ENCODE measurements at regions of chr3 and their contacts with region 1.

Region 1: DNA sequence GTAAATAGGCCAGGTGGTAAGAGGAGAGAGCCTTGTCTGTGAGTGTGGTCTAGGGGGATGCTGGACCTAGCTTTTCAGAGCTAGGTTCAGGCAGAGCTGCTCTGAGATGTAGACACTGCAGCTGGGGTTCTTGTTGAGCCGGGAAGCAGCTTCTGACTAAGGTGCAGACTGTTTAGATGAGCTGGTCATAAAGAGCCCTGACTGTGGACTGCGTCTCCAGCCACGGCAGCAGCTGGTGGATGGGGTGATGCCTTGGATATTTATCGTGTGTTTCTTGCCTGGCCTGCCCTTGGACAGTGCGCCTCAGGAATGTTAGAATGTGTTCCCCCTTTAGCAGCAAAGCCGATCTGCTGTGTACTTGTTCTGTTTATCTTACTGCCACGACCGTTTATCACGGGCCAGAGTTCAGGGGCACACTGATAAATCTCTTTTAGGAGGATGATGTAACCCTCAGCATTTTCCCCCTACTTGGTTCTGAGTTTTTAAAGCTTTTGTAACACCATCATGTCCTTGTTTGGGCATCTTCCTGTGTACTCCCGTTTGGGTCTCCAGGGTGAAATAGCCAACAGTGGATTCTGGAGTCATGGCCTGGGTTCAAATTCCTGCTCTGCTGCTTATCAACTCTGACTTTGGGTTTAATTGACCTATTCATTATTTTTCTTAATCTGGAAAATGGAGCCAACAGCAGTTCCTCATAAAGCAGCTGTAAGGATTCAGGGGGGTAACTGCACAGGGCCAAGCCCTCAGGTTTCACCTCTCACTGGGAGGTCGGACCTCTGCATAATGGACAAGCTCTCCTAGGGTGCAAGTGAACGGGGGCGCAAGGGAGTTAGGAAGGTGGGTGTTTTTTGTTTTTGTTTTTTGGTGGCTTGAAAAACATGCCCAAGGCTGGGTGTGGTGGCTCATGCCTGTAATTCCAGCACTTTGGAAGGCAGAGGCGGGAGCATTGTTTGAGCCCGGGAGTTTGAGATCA is 51.4 kb downstream of the FLNB start:
- DNase-seq: peak; percentile 50 to 66 (median 60)
- ATAC-seq: peak; percentile 88
- H3K4me3 ChIP-seq: no peak overlapping the region
- H3K27ac ChIP-seq: peak overlapping the region; percentile 34 to 75 (median 54)
- H3K4me1 ChIP-seq: peaks cover 39% of the 10 kb centered on the region
- H3K27me3 ChIP-seq: no peaks in the 10 kb centered on the region
- CTCF ChIP-seq: no peak
- POLR2A ChIP-seq: peak in 2 of 3 donors; percentile 21 to 52

Region 2: GRCh38 chr3:58013973-58014649 is 45.5 kb before region 1 on chr3:
- intact Hi-C with region 1: loop called (anchors 10 kb)
- DNase-seq: peak in 2 of 4 donors; percentile 37 to 40
- ATAC-seq: no peak
- H3K4me3 ChIP-seq: no peak overlapping the region
- H3K27ac ChIP-seq: peak overlapping the region in 3 of 4 donors; percentile 12 to 32 (median 27)
- H3K4me1 ChIP-seq: peaks cover 87% of the 10 kb centered on the region
- H3K27me3 ChIP-seq: no peaks in the 10 kb centered on the region
- CTCF ChIP-seq: no peak
- POLR2A ChIP-seq: no peak

Region 3: DNA sequence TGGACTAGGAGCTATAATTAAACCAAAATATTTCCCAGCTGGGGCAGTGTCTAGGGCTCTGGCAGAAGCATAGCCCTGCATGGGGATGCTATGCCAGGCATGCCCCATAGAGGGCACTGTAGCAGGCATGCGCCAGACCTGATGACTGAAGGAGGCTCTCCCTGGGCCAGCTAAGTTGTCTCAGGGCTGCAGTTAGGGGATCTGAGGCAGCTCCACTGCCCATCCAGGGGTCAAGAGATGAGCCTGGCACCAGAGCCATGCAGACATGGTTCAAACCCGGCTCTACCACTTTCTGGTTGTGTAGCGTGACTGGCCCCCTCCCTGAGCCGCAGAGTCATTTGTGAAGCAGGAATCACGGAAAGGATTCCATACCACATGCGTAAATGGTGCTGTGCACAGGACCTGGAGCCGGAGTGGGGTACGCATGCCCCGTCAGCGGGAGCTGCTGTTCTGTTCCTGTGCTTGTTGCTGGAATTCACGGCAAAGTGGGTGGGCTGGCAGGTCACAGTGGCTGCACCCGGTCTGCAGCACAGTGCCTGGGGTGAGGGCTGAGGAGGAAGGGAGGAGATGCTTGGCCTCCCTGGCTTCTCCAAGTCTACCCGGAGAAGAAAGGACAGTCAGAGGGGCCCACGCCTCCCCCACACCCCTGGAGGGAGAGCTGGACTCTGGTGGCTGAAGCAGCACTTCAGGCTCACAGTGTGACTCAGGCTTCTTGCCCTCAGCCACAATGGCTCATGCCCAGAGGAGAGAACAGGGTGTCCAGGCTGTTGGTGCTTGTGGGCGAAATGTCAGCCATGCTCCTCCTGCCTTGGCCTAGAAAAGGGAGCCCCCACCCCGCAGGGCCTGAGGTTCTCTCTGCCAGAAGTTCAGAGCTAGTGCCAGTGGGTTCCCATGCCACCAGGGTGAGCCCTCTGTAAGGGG is 108.1 kb after region 1 on chr3:
- intact Hi-C with region 1: no loop called
- DNase-seq: peak; percentile 68 to 81 (median 74)
- ATAC-seq: no peak
- H3K4me3 ChIP-seq: no peak overlapping the region
- H3K27ac ChIP-seq: peak overlapping the region in 3 of 4 donors; percentile 7 to 88 (median 26)
- H3K4me1 ChIP-seq: peaks cover 55% of the 10 kb centered on the region
- H3K27me3 ChIP-seq: no peaks in the 10 kb centered on the region
- CTCF ChIP-seq: peak; percentile 69 to 91 (median 79)
- POLR2A ChIP-seq: no peak

Measured in body of pancreas (tissue), 4 donors.